Mammary epithelial cell (primary cell): ENCODE measurements at regions of chr3 and their contacts with region 1.

Region 1: DNA sequence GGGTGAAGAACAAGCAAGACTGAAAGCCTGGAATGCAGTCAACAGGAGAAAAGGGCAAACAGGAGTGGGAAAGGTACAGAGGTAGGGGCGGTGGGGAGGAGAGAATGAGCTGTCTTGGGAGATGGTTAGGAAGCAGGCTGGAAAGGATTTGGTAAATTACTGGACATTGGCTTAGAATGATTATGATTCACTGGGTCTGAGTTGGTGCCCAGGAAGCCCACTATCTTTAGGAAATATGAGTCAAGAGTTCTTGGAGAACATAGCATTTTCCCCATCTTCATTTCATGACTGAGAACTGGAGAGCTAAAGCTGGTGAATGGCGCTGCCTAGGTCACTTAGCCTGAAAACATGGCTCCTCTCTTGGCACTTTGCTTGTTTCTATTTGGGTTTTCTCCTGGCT is 74.7 kb upstream of the C3orf80 start:
- DNase-seq: no peak
- H3K4me3 ChIP-seq: no peak overlapping the region
- H3K27ac ChIP-seq: no peak overlapping the region
- H3K4me1 ChIP-seq: no peaks in the 10 kb centered on the region
- H3K27me3 ChIP-seq: no peaks in the 10 kb centered on the region
- CTCF ChIP-seq: no peak

Region 2: GRCh38 chr3:160099834-160100233 is 50.7 kb before region 1 on chr3:
- CTCF ChIA-PET with region 1: no interaction called
- dilution Hi-C with region 1: loop called (anchors 5 kb)
- in situ Hi-C with region 1: no loop called
- intact Hi-C with region 1: no loop called
- DNase-seq: no peak
- H3K4me3 ChIP-seq: no peak overlapping the region
- H3K27ac ChIP-seq: no peak overlapping the region
- H3K4me1 ChIP-seq: no peaks in the 10 kb centered on the region
- H3K27me3 ChIP-seq: peaks cover 2% of the 10 kb centered on the region
- CTCF ChIP-seq: no peak

Region 3: GRCh38 chr3:160343132-160343531 is 192.6 kb after region 1 on chr3:
- CTCF ChIA-PET with region 1: no interaction called
- dilution Hi-C with region 1: no loop called
- in situ Hi-C with region 1: loop called in 1 of 2 experiments (anchors 10 kb)
- intact Hi-C with region 1: no loop called
- DNase-seq: peak; percentile 4
- H3K4me3 ChIP-seq: no peak overlapping the region
- H3K27ac ChIP-seq: no peak overlapping the region
- H3K4me1 ChIP-seq: no peaks in the 10 kb centered on the region
- H3K27me3 ChIP-seq: no peaks in the 10 kb centered on the region
- CTCF ChIP-seq: peak; percentile 41 to 51

Region 4: DNA sequence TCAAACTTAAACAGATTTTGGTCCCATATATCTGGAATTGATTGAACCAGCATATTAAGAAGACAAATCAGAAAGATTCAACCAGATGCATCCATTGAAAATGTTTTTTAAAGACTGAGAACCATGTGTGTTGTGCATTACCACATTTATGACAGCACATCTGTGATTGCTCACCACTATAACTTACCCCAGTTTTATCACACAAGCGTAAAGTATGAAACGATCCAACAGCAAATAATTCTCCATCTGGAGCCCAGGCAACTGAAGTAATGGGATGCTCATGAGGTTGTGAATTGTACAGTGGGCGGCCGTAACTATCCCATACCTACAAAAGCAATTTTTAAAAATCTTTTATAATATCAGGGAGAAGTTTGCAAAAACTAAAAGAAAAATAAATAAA is 205.3 kb after region 1 on chr3:
- CTCF ChIA-PET with region 1: no interaction called
- dilution Hi-C with region 1: no loop called
- in situ Hi-C with region 1: no loop called
- intact Hi-C with region 1: no loop called
- DNase-seq: no peak
- H3K4me3 ChIP-seq: no peak overlapping the region
- H3K27ac ChIP-seq: no peak overlapping the region
- H3K4me1 ChIP-seq: no peaks in the 10 kb centered on the region
- H3K27me3 ChIP-seq: no peaks in the 10 kb centered on the region
- CTCF ChIP-seq: no peak